ENCODE measurements at regions of chr6 and their contacts with region 1.

Region 1: GRCh38 chr6:3456755-3457466 is at the start of gene SLC22A23:
- DNase-seq: peak; percentile 82
- ATAC-seq: peak; percentile 60
- H3K4me3 Mint-ChIP-seq: peak within 1 kb of the TSS; percentile 80
- H3K27ac Mint-ChIP-seq: peak within 1 kb of the TSS; percentile 41; the same call in 1 of the 2 replicates
- H3K4me1 Mint-ChIP-seq: peaks cover 35% of the 10 kb centered on the region
- H3K27me3 Mint-ChIP-seq: peaks cover 5% of the 10 kb centered on the region; the same call in 1 of the 2 replicates
- CTCF ChIP-seq: peak; percentile 91
- total RNA-seq, gene SLC22A23: 33.6 to 38.2 TPM (median 33.8 TPM) in 3 replicates

Region 2: GRCh38 chr6:3442431-3443220 is 14.3 kb before region 1 on chr6:
- CTCF ChIA-PET with region 1: interaction called, 15 read pairs
- POLR2A ChIA-PET with region 1: interaction called, 4 read pairs
- DNase-seq: no peak
- ATAC-seq: no peak
- H3K4me3 Mint-ChIP-seq: no peak overlapping the region
- H3K27ac Mint-ChIP-seq: peak overlapping the region; percentile 0; the same call in 1 of the 2 replicates
- H3K4me1 Mint-ChIP-seq: peaks cover 67% of the 10 kb centered on the region
- H3K27me3 Mint-ChIP-seq: no peaks in the 10 kb centered on the region
- CTCF ChIP-seq: no peak

Measured in WTC11 (cell line).